ENCODE measurements at regions of chr18 and their contacts with region 1.

Region 1: GRCh38 chr18:47100214-47100831 is 50.0 kb downstream of the HDHD2 start:
- DNase-seq: peak; percentile 43 to 56
- H3K4me3 ChIP-seq: no peak overlapping the region
- H3K4me3 Mint-ChIP-seq: no peak overlapping the region
- H3K27ac Mint-ChIP-seq: no peak overlapping the region
- H3K4me1 ChIP-seq: no peaks in the 10 kb centered on the region
- H3K4me1 Mint-ChIP-seq: no peaks in the 10 kb centered on the region
- H3K27me3 ChIP-seq: no peaks in the 10 kb centered on the region
- H3K27me3 Mint-ChIP-seq: no peaks in the 10 kb centered on the region
- CTCF ChIP-seq: peak; percentile 38 to 51

Region 2: DNA sequence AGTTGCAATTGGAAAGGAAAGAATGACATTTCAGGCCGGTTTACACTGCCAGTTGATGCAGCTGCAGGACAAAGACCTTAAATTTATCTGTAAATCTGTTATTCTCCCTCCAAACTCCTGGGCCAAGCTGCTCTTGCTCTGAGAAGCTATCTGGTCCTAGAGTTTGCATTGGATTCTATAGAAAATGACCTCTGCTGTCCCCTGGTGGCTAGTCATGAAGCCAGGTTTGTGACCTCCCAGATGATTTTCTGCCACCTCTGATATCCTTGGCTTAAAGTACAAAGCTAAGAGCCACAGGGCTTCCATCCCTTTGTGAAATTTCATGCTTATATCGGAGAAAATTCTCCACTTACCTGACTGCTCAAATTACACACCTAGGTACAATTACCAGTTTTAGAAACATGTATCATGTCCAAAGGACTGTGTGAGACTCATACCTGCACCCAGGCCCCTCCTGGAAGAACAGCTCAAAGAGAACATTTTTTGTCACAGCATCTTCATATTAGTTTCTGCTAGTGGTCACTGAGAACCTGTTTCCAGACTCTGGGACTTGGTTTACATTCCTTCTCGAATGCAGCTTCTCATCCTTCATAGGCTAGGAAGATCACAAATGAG is 104.7 kb after region 1 on chr18:
- CTCF ChIA-PET with region 1: interaction called, 5 read pairs
- POLR2A ChIA-PET with region 1: no interaction called
- intact Hi-C with region 1: loop called (anchors 1 kb)
- DNase-seq: peak in 1 of 2 experiments; percentile 38
- H3K4me3 ChIP-seq: no peak overlapping the region
- H3K4me3 Mint-ChIP-seq: no peak overlapping the region
- H3K27ac Mint-ChIP-seq: no peak overlapping the region
- H3K4me1 ChIP-seq: no peaks in the 10 kb centered on the region
- H3K4me1 Mint-ChIP-seq: no peaks in the 10 kb centered on the region
- H3K27me3 ChIP-seq: no peaks in the 10 kb centered on the region
- H3K27me3 Mint-ChIP-seq: peaks cover 7% of the 10 kb centered on the region
- CTCF ChIP-seq: peak; percentile 50 to 79

Region 3: GRCh38 chr18:47756364-47757016 is 656.2 kb after region 1 on chr18:
- CTCF ChIA-PET with region 1: no interaction called
- POLR2A ChIA-PET with region 1: no interaction called
- intact Hi-C with region 1: loop called (anchors 5 kb)
- DNase-seq: peak; percentile 39 to 53
- H3K4me3 ChIP-seq: no peak overlapping the region
- H3K4me3 Mint-ChIP-seq: no peak overlapping the region
- H3K27ac Mint-ChIP-seq: no peak overlapping the region
- H3K4me1 ChIP-seq: no peaks in the 10 kb centered on the region
- H3K4me1 Mint-ChIP-seq: no peaks in the 10 kb centered on the region
- H3K27me3 ChIP-seq: no peaks in the 10 kb centered on the region
- H3K27me3 Mint-ChIP-seq: peaks cover 6% of the 10 kb centered on the region
- CTCF ChIP-seq: peak; percentile 62 to 73

Measured in Caco-2 (cell line).